ENCODE measurements at regions of chr12 and their contacts with region 1.

Region 1: GRCh38 chr12:109685574-109686447 is 27.8 kb upstream of the FAM222A start:
- DNase-seq: no peak
- H3K4me3 ChIP-seq: no peak overlapping the region
- H3K27ac ChIP-seq: no peak overlapping the region
- H3K4me1 ChIP-seq: no peaks in the 10 kb centered on the region
- H3K27me3 ChIP-seq: no peaks in the 10 kb centered on the region
- CTCF ChIP-seq: no peak
- EP300 ChIP-seq: no peak
- POLR2A ChIP-seq: no peak

Region 2: DNA sequence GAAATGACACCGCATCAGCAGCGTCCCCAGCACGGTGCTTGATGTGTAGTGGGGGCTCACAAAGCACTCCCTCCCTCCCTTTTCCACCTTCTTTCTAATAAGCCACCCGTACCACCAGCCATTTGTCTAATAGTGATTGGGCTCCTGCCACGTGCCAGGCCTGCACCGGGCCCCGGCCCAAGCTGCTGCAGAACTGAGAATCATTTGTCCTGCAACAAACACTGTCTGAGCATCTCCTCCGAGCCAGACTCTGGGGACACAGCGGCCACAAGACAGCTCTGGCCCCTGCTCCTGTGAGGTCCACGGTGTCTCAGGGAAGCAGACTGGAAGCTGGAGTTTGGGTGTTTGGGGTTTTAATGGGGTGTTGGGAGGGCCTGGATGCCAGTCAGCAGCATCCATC is 68.3 kb before region 1 on chr12:
- intact Hi-C with region 1: loop called in 1 of 4 experiments (anchors 5 kb)
- DNase-seq: no peak
- H3K4me3 ChIP-seq: no peak overlapping the region
- H3K27ac ChIP-seq: no peak overlapping the region
- H3K4me1 ChIP-seq: peaks cover 1% of the 10 kb centered on the region
- H3K27me3 ChIP-seq: no peaks in the 10 kb centered on the region
- CTCF ChIP-seq: no peak
- EP300 ChIP-seq: no peak
- POLR2A ChIP-seq: no peak

Region 3: GRCh38 chr12:110689281-110690126 is 1003.7 kb after region 1 on chr12:
- intact Hi-C with region 1: no loop called
- DNase-seq: peak in 4 of 5 donors; percentile 51 to 71 (median 65)
- H3K4me3 ChIP-seq: peak overlapping the region; percentile 67
- H3K27ac ChIP-seq: peak overlapping the region; percentile 64 to 80
- H3K4me1 ChIP-seq: peaks cover 3% of the 10 kb centered on the region
- H3K27me3 ChIP-seq: no peaks in the 10 kb centered on the region
- CTCF ChIP-seq: no peak
- EP300 ChIP-seq: no peak
- POLR2A ChIP-seq: no peak